Activated T-helper 1 cell treated with anti-CD3 and anti-CD28 coated beads, Interleukin-12 subunit alpha, Interleukin-12 subunit beta, Interleukin-2, Interleukin-4 antibody, amounts not matched to agents 30 ng/mL and 10 ng/mL and 1 ng/mL, durations not matched to agents 14 hours and 24 hours and 36 hours (primary cell): ENCODE measurements at regions of chr12 and their contacts with region 1.

Region 1: GRCh38 chr12:94326727-94327126 is 132.9 kb downstream of the CEP83 start:
- DNase-seq: no peak
- H3K4me3 Mint-ChIP-seq: no peak overlapping the region
- H3K27ac Mint-ChIP-seq: peak overlapping the region; percentile 51
- H3K4me1 Mint-ChIP-seq: peaks cover 29% of the 10 kb centered on the region
- H3K27me3 Mint-ChIP-seq: no peaks in the 10 kb centered on the region

Region 2: GRCh38 chr12:94269316-94269999 is 57.3 kb before region 1 on chr12:
- intact Hi-C with region 1: loop called (anchors 1 kb)
- DNase-seq: no peak
- H3K4me3 Mint-ChIP-seq: peak overlapping the region; percentile 43
- H3K27ac Mint-ChIP-seq: peak overlapping the region; percentile 72
- H3K4me1 Mint-ChIP-seq: peaks cover 72% of the 10 kb centered on the region
- H3K27me3 Mint-ChIP-seq: no peaks in the 10 kb centered on the region

Region 3: DNA sequence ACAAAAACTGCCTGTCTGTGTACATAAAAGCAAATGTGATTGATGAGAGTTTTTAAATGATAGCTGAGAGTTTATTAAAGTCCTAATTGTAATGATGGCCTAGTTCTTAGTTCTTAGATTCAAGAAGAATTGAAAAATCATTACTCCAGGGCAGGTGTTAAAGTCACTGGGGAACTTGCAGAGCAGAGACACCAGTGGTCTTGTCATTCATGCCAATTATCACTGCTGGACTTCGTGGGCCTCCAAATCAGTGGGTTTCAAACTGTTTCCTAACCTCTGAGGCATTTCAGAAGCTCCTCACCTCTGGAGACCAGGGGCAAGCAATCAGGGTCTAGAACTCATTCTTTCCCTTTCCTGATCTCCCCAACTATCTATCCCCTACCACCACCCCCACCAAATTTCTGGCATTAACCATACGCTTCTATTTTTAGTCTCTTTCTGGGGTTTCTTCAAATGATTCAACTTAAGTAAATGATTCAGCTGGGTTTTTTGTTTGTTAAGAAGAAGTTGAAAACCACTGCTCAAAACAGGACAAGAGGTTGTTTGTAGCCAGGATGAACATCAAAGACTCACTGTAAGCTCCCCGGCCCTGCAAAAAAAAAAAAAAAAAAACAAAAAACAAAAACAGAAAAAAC is 52.9 kb after region 1 on chr12:
- intact Hi-C with region 1: loop called (anchors 1 kb)
- DNase-seq: peak; percentile 2
- H3K4me3 Mint-ChIP-seq: peak overlapping the region; percentile 3
- H3K27ac Mint-ChIP-seq: peak overlapping the region; percentile 79
- H3K4me1 Mint-ChIP-seq: peaks cover 58% of the 10 kb centered on the region
- H3K27me3 Mint-ChIP-seq: no peaks in the 10 kb centered on the region

Region 4: GRCh38 chr12:94434171-94434570 is 107.4 kb after region 1 on chr12:
- intact Hi-C with region 1: loop called (anchors 5 kb)
- DNase-seq: no peak
- H3K4me3 Mint-ChIP-seq: no peak overlapping the region
- H3K27ac Mint-ChIP-seq: no peak overlapping the region
- H3K4me1 Mint-ChIP-seq: peaks cover 26% of the 10 kb centered on the region
- H3K27me3 Mint-ChIP-seq: no peaks in the 10 kb centered on the region